Heart left ventricle (tissue), 16 donors: ENCODE measurements at regions of chr19 and their contacts with region 1.

Region 1: GRCh38 chr19:3479177-3479833 is 1.0 kb downstream of the SMIM24 start:
- DNase-seq: no peak
- ATAC-seq: no peak
- H3K4me3 ChIP-seq: no peak overlapping the region
- H3K27ac ChIP-seq: no peak overlapping the region
- H3K4me1 ChIP-seq: no peaks in the 10 kb centered on the region
- H3K27me3 ChIP-seq: peaks cover 14 to 49% (median 34%) of the 10 kb centered on the region in 9 donors
- CTCF ChIP-seq: no peak
- POLR2A ChIP-seq: no peak

Region 2: DNA sequence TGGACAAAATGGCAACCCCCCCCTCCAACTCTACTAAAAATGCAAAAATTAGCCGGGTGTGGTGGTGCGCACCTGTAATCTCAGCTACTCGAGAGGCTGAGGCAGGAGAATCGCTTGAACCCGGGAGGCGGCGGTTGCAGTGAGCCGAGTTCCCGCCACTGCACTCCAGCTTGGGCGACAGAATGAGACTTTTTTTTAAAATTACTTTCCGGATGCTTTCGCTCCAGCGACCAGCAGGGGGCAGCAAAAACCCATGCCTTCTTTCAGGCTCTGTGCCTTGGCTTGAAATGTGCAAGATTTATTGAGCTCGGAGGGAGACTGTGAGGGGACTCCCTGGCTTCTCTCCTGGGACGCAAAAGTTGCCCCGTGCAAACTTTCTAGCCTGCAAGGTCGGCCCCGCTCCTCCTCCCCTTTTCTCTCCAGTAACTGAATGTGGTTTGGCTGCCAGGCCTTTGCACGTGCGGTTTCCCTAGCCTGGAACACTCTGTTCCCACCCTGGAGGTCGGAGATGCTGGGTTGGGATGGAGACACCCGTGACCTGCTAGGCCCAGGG is 174.4 kb before region 1 on chr19:
- intact Hi-C with region 1: loop called in 2 of 10 experiments (anchors 5 kb)
- DNase-seq: peak; percentile 51 to 81 (median 62)
- ATAC-seq: peak; percentile 45 to 69 (median 64)
- H3K4me3 ChIP-seq: no peak overlapping the region
- H3K27ac ChIP-seq: no peak overlapping the region
- H3K4me1 ChIP-seq: peaks cover 0 to 10% (median 1%) of the 10 kb centered on the region in 12 donors
- H3K27me3 ChIP-seq: peaks cover 0 to 59% (median 14%) of the 10 kb centered on the region in 9 donors
- CTCF ChIP-seq: peak; percentile 76 to 92 (median 89)
- POLR2A ChIP-seq: no peak

Region 3: DNA sequence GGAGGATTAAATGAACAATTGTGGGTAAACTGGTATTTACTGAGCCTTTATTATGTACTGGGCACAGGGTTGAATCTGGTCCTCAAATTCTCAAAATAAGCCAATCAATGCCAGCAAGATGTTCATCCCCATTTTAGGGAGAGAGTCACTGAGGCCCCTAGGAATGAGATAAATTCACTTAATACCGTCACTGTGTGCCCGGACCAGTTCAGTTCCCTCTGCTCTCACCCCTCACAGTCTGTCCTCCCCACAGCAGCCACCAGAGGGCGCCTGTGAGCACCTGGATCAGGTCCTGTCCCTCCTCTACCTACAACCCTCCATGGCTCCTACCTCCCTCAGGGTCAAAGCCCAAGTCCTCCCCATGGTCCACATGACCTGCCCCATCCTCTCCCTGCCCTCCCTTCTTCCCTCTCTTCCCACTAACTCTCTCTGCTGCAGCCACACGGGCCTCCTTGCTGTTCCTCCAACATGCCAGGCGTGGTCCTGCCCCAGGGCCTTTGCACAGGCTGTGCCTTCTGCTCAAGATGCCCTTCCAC is 154.9 kb before region 1 on chr19:
- intact Hi-C with region 1: loop called in 3 of 10 experiments (anchors 1 to 5 kb)
- DNase-seq: peak in 3 of 5 donors; percentile 28 to 78 (median 44)
- ATAC-seq: peak in 3 of 4 donors; percentile 47 to 49 (median 48)
- H3K4me3 ChIP-seq: no peak overlapping the region
- H3K27ac ChIP-seq: no peak overlapping the region
- H3K4me1 ChIP-seq: no peaks in the 10 kb centered on the region
- H3K27me3 ChIP-seq: peaks cover 8 to 24% (median 17%) of the 10 kb centered on the region in 9 donors
- CTCF ChIP-seq: peak; percentile 45 to 71 (median 60)
- POLR2A ChIP-seq: no peak

Region 4: GRCh38 chr19:3586124-3586626 is 106.9 kb after region 1 on chr19:
- intact Hi-C with region 1: no loop called
- DNase-seq: no peak
- ATAC-seq: peak in 2 of 4 donors; percentile 7 to 57
- H3K4me3 ChIP-seq: peak overlapping the region; percentile 21 to 65 (median 56)
- H3K27ac ChIP-seq: peak overlapping the region in 5 of 12 donors; percentile 27 to 65 (median 46)
- H3K4me1 ChIP-seq: peaks cover 0 to 22% (median under 1%) of the 10 kb centered on the region in 12 donors
- H3K27me3 ChIP-seq: peaks cover 0 to 30% (median 11%) of the 10 kb centered on the region in 9 donors
- CTCF ChIP-seq: peak; percentile 39 to 71 (median 60)
- POLR2A ChIP-seq: no peak